ENCODE measurements at regions of chr15 and their contacts with region 1.

Region 1: GRCh38 chr15:72796515-72797337 is 13.2 kb upstream of the ADPGK start:
- ATAC-seq: peak; percentile 76 to 97 (median 89)
- H3K4me3 ChIP-seq: peak overlapping the region; percentile 25 to 38 (median 31)
- H3K27ac ChIP-seq: no peak overlapping the region
- H3K4me1 ChIP-seq: peaks cover 13 to 22% of the 10 kb centered on the region in 2 donors

Region 2: GRCh38 chr15:72237286-72238224 is 559.2 kb before region 1 on chr15:
- in situ Hi-C with region 1: no loop called
- ATAC-seq: peak; percentile 91 to 98 (median 93)
- H3K4me3 ChIP-seq: no peak overlapping the region
- H3K27ac ChIP-seq: peak overlapping the region in 1 of 2 donors; percentile 49
- H3K4me1 ChIP-seq: peaks cover 0 to under 1% of the 10 kb centered on the region in 2 donors

Region 3: GRCh38 chr15:72464251-72464650 is 332.5 kb before region 1 on chr15:
- in situ Hi-C with region 1: no loop called
- ATAC-seq: no peak
- H3K4me3 ChIP-seq: no peak overlapping the region
- H3K27ac ChIP-seq: no peak overlapping the region
- H3K4me1 ChIP-seq: no peaks in the 10 kb centered on the region

Region 4: GRCh38 chr15:73051811-73052678 is 255.3 kb after region 1 on chr15 and contains the start of gene NEO1:
- in situ Hi-C with region 1: loop called in 2 of 9 experiments (anchors 10 to 25 kb)
- ATAC-seq: peak; percentile 77 to 84 (median 80)
- H3K4me3 ChIP-seq: peak within 1 kb of the TSS; percentile 50 to 78 (median 67)
- H3K27ac ChIP-seq: peak within 1 kb of the TSS; percentile 93 to 95
- H3K4me1 ChIP-seq: peaks cover 0 to 13% of the 10 kb centered on the region in 2 donors
- total RNA-seq, gene NEO1: 21.5 to 98.0 (median 48.5) TPM

Region 5: GRCh38 chr15:73081321-73081958 is 284.7 kb after region 1 on chr15:
- in situ Hi-C with region 1: loop called in 6 of 9 experiments (anchors 10 to 25 kb)
- ATAC-seq: peak in 4 of 8 experiments; percentile 33 to 64 (median 53)
- H3K4me3 ChIP-seq: no peak overlapping the region
- H3K27ac ChIP-seq: no peak overlapping the region
- H3K4me1 ChIP-seq: peaks cover 3% of the 10 kb centered on the region in 2 donors

Region 6: GRCh38 chr15:73105064-73105463 is 308.3 kb after region 1 on chr15:
- in situ Hi-C with region 1: no loop called
- ATAC-seq: no peak
- H3K4me3 ChIP-seq: no peak overlapping the region
- H3K27ac ChIP-seq: no peak overlapping the region
- H3K4me1 ChIP-seq: no peaks in the 10 kb centered on the region

Measured in motor neuron (in vitro differentiated cells).